Motor neuron (in vitro differentiated cells): ENCODE measurements at regions of chr14 and their contacts with region 1.

Region 1: DNA sequence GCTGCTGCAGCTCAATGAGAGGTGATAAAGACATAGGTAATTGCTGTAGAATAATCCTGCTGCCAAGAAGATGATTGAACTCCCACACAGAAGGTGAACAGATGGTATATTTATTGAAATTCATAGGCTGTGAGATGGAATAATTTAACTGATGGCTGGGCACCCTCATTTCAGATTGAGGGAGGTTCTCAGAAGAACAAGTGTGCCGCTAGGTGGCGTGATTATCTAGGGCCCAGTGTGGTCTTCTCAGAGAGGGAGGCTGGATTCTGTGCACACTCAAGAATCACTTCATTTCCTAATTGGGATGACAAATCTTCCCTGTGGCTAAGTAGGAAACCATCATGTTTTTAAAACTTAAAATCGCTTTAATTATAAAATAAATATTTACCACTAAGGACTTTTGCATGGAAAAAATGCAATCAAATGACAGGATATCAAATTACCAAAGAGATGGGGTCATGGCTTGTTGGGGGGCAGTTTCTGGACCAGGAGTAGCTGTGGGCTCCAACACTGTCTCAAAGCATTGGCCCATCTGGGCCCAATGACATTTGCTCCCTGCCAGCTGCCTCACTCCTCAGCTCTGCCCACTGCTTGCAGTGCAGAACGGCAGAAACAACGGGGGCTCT is 132.3 kb downstream of the SNAPC1 start:
- ATAC-seq: peak in 7 of 8 experiments; percentile 40 to 93 (median 60)
- H3K4me3 ChIP-seq: no peak overlapping the region
- H3K27ac ChIP-seq: no peak overlapping the region
- H3K4me1 ChIP-seq: peaks cover 16 to 21% of the 10 kb centered on the region in 2 donors

Region 2: GRCh38 chr14:62117010-62117750 is 222.6 kb after region 1 on chr14:
- in situ Hi-C with region 1: loop called in 3 of 9 experiments (anchors 10 to 25 kb)
- ATAC-seq: peak; percentile 93 to 100 (median 100)
- H3K4me3 ChIP-seq: peak overlapping the region; percentile 32 to 60 (median 41)
- H3K27ac ChIP-seq: no peak overlapping the region
- H3K4me1 ChIP-seq: peaks cover 0 to 4% of the 10 kb centered on the region in 2 donors

Region 3: DNA sequence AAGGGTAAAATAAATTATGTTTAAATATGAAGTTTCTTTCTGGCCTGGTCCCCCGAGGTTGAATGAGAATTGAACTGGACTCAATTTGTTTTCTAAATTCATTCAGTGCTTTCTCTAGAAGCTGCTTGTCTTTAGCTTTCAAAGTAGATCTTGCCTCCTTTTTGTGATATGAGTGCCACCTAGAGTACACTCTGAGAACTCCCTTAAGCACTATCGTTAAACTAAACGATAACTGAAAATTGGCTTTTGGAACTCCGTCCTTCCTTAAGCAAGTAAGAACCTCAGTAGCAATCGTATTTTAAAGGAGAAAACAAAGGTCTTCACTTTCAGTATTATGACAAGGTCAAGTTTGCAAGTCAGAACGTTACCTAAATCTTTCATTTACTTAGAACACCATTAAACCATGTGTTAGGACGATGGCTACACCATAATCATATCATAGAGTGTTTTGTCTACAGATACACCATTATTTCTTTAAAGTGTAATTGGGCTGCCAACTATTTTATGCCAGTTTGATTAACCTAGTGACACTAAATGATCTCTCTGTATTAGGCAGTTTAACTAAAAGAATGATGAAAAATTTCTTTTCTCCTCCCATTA is 232.4 kb after region 1 on chr14:
- in situ Hi-C with region 1: loop called in 4 of 9 experiments (anchors 10 to 25 kb)
- ATAC-seq: peak; percentile 56 to 80 (median 63)
- H3K4me3 ChIP-seq: no peak overlapping the region
- H3K27ac ChIP-seq: no peak overlapping the region
- H3K4me1 ChIP-seq: no peaks in the 10 kb centered on the region